ENCODE measurements at regions of chr14 and their contacts with region 1.

Region 1: DNA sequence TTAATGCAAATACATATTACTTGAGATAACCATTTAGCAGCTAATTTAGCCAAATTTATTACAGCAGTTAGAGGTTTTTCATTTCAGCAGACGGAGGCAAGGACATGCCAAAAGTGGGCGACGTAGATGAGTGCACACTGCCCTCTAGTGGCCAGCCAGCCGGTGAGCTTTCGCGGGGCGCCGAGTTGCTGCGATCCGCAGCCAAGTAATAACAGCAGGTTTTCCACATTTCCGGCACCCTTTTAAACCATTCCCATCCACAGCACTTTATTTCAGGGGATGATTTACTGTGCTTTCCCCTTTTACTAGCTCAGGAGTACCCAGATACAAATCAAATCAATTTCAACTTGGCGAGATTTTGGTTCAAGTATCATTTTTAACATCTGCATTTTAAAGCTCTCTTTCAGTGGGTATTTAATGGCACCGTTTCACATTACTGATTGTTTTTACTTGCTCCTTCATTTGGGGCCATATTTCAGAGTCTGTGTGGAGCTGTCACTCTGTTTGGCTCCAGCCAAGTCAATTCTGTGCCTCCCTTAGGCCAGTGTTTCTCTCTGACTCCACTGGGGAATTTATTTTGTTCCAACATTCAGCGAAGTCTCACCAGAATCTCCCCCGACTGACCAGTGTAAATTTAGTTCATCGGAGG is 158.0 kb downstream of the EGLN3 start:
- DNase-seq: peak; percentile 48
- H3K4me3 ChIP-seq: no peak overlapping the region
- H3K27ac ChIP-seq: no peak overlapping the region
- H3K4me1 ChIP-seq: peaks cover 6% of the 10 kb centered on the region
- H3K27me3 ChIP-seq: no peaks in the 10 kb centered on the region
- CTCF ChIP-seq: peak; percentile 72 to 92

Region 2: DNA sequence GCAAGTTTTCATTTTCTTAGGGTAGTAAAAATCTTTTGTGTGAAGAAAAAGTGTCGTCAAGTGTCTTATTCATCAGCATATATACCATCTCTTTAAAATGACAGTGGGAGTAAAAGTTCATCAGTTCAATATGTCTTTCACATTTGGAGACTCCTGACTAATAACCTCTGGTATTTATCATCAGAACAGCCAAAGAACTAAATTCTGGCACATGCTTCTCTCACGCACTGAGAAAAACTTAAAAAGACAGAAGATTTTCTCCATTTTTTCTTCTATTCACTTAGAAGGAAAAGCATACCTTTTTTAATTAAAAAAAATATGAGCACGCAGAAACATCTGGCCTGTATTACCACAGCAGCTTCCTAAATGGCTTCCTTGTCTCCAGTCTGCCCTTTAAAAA is 1198.1 kb before region 1 on chr14:
- CTCF ChIA-PET with region 1: interaction called, 22 read pairs
- dilution Hi-C with region 1: loop called (anchors 25 kb)
- in situ Hi-C with region 1: loop called in 1 of 2 experiments (anchors 25 kb)
- intact Hi-C with region 1: no loop called
- DNase-seq: peak; percentile 23
- H3K4me3 ChIP-seq: no peak overlapping the region
- H3K27ac ChIP-seq: peak overlapping the region; percentile 38
- H3K4me1 ChIP-seq: peaks cover 46% of the 10 kb centered on the region
- H3K27me3 ChIP-seq: no peaks in the 10 kb centered on the region
- CTCF ChIP-seq: no peak

Region 3: DNA sequence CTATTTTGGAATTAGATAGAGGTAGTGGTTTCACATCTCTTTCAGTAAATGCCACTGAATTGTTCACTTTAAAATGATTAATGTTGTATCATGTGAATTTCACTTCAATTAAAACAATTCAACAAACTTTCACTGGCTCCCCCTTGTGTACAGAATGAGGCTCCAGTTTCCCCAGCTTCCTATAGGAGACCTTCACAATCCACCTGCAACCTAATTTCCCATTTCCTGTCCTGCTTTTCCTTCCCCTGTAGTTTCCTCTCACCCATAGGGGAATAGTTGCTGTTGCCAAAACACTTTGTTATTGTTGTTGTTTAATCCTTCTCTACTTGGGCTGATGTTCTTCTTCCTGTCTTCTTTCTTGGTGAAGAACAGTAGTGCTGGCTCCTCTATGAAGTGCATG is 794.4 kb before region 1 on chr14:
- CTCF ChIA-PET with region 1: no interaction called
- dilution Hi-C with region 1: no loop called
- in situ Hi-C with region 1: no loop called
- intact Hi-C with region 1: loop called (anchors 5 kb)
- DNase-seq: peak; percentile 9
- H3K4me3 ChIP-seq: no peak overlapping the region
- H3K27ac ChIP-seq: no peak overlapping the region
- H3K4me1 ChIP-seq: no peaks in the 10 kb centered on the region
- H3K27me3 ChIP-seq: no peaks in the 10 kb centered on the region
- CTCF ChIP-seq: peak; percentile 44 to 61

Region 4: DNA sequence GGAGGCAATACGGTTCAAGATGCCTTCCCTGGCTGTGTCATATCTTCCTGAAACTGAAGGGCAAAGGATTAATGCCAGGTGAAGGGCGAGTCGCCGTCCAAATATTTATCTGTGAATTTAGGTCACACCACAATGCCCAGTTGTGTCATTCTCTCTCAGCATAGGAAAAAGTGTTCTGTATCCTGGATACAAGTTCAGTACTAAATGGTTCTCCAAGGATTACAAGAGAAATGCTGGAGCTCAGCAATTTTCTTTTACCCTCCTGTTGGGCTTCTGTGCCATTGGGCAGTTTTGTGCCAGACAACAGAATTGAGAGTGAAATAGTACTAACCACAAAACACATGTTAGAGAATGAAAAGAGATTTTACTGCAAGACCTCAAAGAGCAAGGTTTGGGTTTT is 335.8 kb before region 1 on chr14:
- CTCF ChIA-PET with region 1: no interaction called
- dilution Hi-C with region 1: no loop called
- in situ Hi-C with region 1: loop called in 1 of 2 experiments (anchors 25 kb)
- intact Hi-C with region 1: no loop called
- DNase-seq: peak; percentile 50
- H3K4me3 ChIP-seq: no peak overlapping the region
- H3K27ac ChIP-seq: no peak overlapping the region
- H3K4me1 ChIP-seq: peaks cover 15% of the 10 kb centered on the region
- H3K27me3 ChIP-seq: no peaks in the 10 kb centered on the region
- CTCF ChIP-seq: no peak

Region 5: GRCh38 chr14:33647385-33647786 is 145.5 kb before region 1 on chr14:
- CTCF ChIA-PET with region 1: interaction called, 10 read pairs
- dilution Hi-C with region 1: no loop called
- in situ Hi-C with region 1: no loop called
- intact Hi-C with region 1: no loop called
- DNase-seq: peak; percentile 96
- H3K4me3 ChIP-seq: no peak overlapping the region
- H3K27ac ChIP-seq: peak overlapping the region; percentile 91
- H3K4me1 ChIP-seq: peaks cover 19% of the 10 kb centered on the region
- H3K27me3 ChIP-seq: no peaks in the 10 kb centered on the region
- CTCF ChIP-seq: no peak

Region 6: DNA sequence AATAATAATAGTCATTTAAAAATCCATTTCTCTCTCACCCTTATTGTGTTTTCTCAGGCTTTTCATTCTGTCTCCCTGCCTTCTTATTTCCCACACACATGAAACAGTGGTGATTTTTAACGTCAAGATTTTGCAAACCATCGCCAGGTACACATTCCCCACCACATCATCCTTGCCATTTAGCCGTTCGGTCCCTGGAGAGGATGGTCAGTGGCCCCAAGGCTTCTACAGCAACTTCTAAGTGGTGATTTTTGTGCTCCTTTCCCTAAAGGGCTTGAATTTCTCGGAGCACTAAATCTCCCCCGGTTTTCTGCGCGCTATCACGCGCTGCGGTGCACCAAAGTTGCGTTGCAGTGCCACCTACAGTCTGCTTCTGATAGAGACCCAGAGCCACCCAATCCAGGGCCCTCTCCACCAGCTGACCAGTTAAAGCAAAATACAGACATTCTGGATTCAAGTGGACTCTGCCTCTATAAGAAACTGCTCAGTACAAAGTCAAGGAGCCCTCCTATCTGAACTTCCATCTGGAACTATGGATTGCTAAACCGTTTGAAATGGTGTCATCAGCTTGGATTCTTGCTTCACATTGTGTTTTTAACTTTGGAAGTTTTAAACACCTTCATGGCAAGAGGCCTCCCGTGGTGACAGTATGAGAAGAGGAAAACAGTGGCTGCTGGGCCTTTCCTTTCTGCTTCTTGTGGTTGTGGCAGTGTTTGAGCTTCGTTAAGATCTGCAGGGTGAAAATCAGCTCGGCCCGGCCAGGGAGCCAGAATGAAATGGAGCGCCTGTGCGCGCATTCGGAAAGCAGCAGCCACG is 435.2 kb after region 1 on chr14:
- CTCF ChIA-PET with region 1: no interaction called
- dilution Hi-C with region 1: no loop called
- in situ Hi-C with region 1: no loop called
- intact Hi-C with region 1: loop called (anchors 2 kb)
- DNase-seq: peak; percentile 50
- H3K4me3 ChIP-seq: peak overlapping the region in 1 of 3 experiments; percentile 13
- H3K27ac ChIP-seq: no peak overlapping the region
- H3K4me1 ChIP-seq: peaks cover 3% of the 10 kb centered on the region
- H3K27me3 ChIP-seq: no peaks in the 10 kb centered on the region
- CTCF ChIP-seq: peak; percentile 71 to 80